ENCODE measurements at regions of chr22 and their contacts with region 1.

Region 1: DNA sequence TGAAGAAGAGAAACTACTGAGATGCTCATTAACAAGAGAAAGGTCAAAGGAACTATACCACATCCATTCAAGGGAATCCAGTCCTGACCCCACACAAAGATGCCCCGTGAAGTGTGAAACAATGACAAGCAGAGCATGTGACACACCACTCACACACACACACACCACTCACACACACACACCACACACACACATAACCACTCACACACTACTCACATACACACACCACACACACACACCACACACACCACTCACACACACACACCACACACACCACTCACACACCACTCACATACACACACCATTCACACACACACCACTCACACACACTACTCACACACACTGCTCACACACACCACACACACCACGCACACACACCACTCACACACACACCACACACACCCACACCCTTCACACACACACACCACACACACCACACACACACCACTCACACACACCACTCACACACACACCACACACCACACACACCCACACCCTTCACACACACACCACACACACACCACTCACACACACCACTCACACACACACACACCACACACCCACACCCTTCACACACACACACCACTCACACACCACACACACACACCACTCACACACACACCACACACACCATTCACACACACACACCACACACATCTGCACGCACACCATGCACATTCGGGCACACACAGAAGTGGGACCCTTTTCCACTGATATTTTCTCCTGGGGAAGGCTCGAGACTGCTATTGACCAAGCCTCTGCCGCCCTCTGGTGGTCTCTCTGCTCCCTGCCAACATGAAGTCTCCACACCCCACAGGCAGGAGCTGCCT is 32.0 kb upstream of the COMT start:
- DNase-seq: no peak
- H3K4me3 ChIP-seq: no peak overlapping the region
- H3K27ac ChIP-seq: no peak overlapping the region
- H3K4me1 ChIP-seq: no peaks in the 10 kb centered on the region
- H3K27me3 ChIP-seq: no peaks in the 10 kb centered on the region
- CTCF ChIP-seq: peak; percentile 82 to 94 (median 89)
- POLR2A ChIP-seq: no peak

Region 2: DNA sequence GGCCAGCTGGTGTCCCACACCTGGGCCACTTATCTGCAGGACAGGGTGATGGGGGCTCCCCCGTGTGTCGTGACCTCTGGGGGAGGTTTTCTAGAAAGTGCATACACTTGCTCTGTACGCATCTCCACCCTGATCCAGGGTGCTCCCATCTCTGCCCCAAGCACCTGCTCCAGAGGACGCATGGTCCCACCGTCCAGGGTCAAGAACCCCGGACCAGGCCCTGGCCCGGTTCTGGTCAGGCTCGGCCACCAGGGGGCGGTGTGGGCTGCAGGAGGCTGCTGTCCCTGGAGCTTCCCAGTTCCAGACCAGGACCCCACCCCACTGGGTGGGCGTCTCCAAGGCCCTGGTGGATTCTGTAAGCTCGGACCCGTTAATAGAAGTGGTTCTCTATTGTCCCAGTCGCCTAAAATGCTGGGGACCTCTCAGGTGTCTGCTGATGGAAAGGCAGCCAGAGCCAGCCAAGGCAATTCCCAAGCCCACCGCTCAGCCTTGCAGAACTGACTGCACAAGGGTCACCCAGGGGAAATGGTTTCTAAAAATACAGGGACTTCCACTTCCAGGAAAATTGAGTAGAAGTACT is 230.0 kb before region 1 on chr22:
- intact Hi-C with region 1: no loop called
- DNase-seq: no peak
- H3K4me3 ChIP-seq: no peak overlapping the region
- H3K27ac ChIP-seq: peak overlapping the region; percentile 16
- H3K4me1 ChIP-seq: no peaks in the 10 kb centered on the region
- H3K27me3 ChIP-seq: no peaks in the 10 kb centered on the region
- CTCF ChIP-seq: peak; percentile 72 to 93 (median 86)
- POLR2A ChIP-seq: no peak

Region 3: GRCh38 chr22:19730655-19731360 is 178.8 kb before region 1 on chr22:
- intact Hi-C with region 1: loop called (anchors 1 kb)
- DNase-seq: no peak
- H3K4me3 ChIP-seq: peak overlapping the region; percentile 28 to 47
- H3K27ac ChIP-seq: no peak overlapping the region
- H3K4me1 ChIP-seq: peaks cover 10% of the 10 kb centered on the region
- H3K27me3 ChIP-seq: no peaks in the 10 kb centered on the region
- CTCF ChIP-seq: peak; percentile 86 to 99 (median 98)
- POLR2A ChIP-seq: no peak

Region 4: DNA sequence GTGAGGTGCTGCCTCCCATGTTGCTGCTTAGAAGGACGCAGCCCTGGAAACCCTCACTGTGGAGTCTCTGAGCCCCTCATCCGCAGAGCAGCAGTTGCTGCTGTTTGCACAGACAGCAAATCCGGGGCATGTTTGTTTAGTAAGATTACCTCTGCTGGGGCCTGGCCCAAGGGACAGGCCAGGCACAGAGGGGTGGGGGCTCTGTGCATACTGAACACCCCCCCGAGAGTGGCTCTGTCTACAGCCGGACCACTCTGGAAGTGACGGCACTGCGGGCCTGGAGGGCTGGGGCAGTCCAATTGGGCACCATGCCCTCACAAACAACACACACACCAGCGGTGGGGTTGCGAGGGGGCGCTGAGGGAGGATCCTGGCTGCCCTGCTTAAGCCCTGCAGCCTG is 264.2 kb after region 1 on chr22:
- intact Hi-C with region 1: no loop called
- DNase-seq: no peak
- H3K4me3 ChIP-seq: no peak overlapping the region
- H3K27ac ChIP-seq: no peak overlapping the region
- H3K4me1 ChIP-seq: no peaks in the 10 kb centered on the region
- H3K27me3 ChIP-seq: no peaks in the 10 kb centered on the region
- CTCF ChIP-seq: no peak
- POLR2A ChIP-seq: no peak